Naive thymus-derived CD4-positive, alpha-beta T cell (primary cell): ENCODE measurements at regions of chr12 and their contacts with region 1.

Region 1: DNA sequence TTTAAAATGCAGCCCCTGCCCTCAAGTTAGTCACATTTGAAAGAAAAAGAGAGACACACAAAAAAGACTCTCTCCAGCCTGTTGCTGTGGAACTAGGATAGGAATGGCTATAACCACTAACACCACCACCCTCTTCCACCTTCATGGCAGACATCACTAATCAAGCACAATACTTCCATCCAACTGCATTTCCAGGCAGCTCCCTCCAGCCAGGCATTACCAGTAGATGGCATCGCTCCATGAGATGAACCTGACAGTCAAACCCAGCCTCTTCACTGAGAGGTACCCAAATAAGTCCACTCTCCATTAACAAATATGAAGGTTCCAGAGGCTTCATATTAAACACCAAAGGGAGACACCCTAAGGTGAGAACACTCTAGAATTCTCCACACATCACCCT is 24.4 kb downstream of the SLC8B1 start:
- DNase-seq: no peak
- ATAC-seq: no peak
- H3K4me3 ChIP-seq: no peak overlapping the region
- H3K4me3 Mint-ChIP-seq: no peak overlapping the region
- H3K27ac ChIP-seq: no peak overlapping the region
- H3K27ac Mint-ChIP-seq: peak overlapping the region in 3 of 9 donors; percentile 36 to 59 (median 43)
- H3K4me1 ChIP-seq: no peaks in the 10 kb centered on the region
- H3K4me1 Mint-ChIP-seq: peaks cover 0 to 4% (median 0%) of the 10 kb centered on the region in 7 donors
- H3K27me3 ChIP-seq: no peaks in the 10 kb centered on the region
- H3K27me3 Mint-ChIP-seq: no peaks in the 10 kb centered on the region

Region 2: GRCh38 chr12:113299619-113300237 is 10.8 kb before region 1 on chr12:
- CTCF ChIA-PET with region 1: no interaction called
- POLR2A ChIA-PET with region 1: no interaction called
- intact Hi-C with region 1: no loop called
- DNase-seq: no peak
- ATAC-seq: no peak
- H3K4me3 ChIP-seq: no peak overlapping the region
- H3K4me3 Mint-ChIP-seq: no peak overlapping the region
- H3K27ac ChIP-seq: no peak overlapping the region
- H3K27ac Mint-ChIP-seq: peak overlapping the region in 4 of 9 donors; percentile 58 to 69 (median 64)
- H3K4me1 ChIP-seq: peaks cover 0 to 14% of the 10 kb centered on the region in 2 donors
- H3K4me1 Mint-ChIP-seq: peaks cover 11 to 24% (median 18%) of the 10 kb centered on the region in 7 donors
- H3K27me3 ChIP-seq: no peaks in the 10 kb centered on the region
- H3K27me3 Mint-ChIP-seq: no peaks in the 10 kb centered on the region

Region 3: GRCh38 chr12:113422030-113422885 is 111.8 kb after region 1 on chr12 and contains the start of gene SDSL:
- CTCF ChIA-PET with region 1: interaction called, 4 read pairs
- POLR2A ChIA-PET with region 1: no interaction called
- intact Hi-C with region 1: loop called in 1 of 2 experiments (anchors 1 kb)
- DNase-seq: peak in 2 of 9 donors; percentile 11 to 38
- ATAC-seq: peak; percentile 91
- H3K4me3 ChIP-seq: no peak within 1 kb of the TSS
- H3K4me3 Mint-ChIP-seq: peak within 1 kb of the TSS in 5 of 10 donors; percentile 44 to 96 (median 89)
- H3K27ac ChIP-seq: no peak within 1 kb of the TSS
- H3K27ac Mint-ChIP-seq: peak within 1 kb of the TSS in 2 of 9 donors; percentile 58 to 91
- H3K4me1 ChIP-seq: no peaks in the 10 kb centered on the region
- H3K4me1 Mint-ChIP-seq: peaks cover 0 to 18% (median 7%) of the 10 kb centered on the region in 7 donors
- H3K27me3 ChIP-seq: no peaks in the 10 kb centered on the region
- H3K27me3 Mint-ChIP-seq: peaks cover 0 to 11% (median 0%) of the 10 kb centered on the region in 5 donors
- total RNA-seq, gene SDSL: 0.46 to 2.5 (median 1.7) TPM in 4 of 5 experiments, not detected in the other

Region 4: DNA sequence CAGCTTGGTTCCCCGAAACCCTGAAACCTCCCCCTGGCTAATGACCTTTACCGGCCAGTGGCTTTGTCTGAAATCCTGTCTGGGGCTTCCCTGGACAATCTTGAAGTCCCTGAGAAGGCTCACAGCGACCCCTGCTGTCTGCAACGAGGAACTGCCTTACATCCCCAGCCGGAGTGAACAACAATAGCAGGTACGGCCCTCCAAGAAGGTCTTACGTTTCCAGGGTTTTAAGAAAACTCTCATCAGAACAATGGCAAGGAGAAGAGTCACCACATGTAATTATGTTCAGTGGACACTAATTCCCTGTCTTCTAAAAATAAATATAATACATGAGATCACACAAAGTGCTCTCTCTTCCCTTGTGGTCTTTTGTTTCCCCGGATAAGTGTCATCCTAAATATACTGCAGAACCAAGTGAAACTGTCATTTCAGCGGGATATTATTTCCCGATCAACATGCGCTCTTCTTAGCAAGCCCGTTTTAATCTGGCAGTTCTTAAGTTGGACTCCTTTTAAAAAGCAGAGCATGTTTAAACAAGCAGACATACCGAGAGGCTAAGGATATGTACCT is 602.4 kb after region 1 on chr12:
- CTCF ChIA-PET with region 1: no interaction called
- POLR2A ChIA-PET with region 1: no interaction called
- intact Hi-C with region 1: loop called in 1 of 2 experiments (anchors 5 kb)
- DNase-seq: peak in 6 of 9 donors; percentile 7 to 51 (median 24)
- ATAC-seq: peak; percentile 47
- H3K4me3 ChIP-seq: no peak overlapping the region
- H3K4me3 Mint-ChIP-seq: no peak overlapping the region
- H3K27ac ChIP-seq: no peak overlapping the region
- H3K27ac Mint-ChIP-seq: peak overlapping the region in 1 of 9 donors; percentile 30
- H3K4me1 ChIP-seq: no peaks in the 10 kb centered on the region
- H3K4me1 Mint-ChIP-seq: peaks cover 0 to 4% (median 0%) of the 10 kb centered on the region in 7 donors
- H3K27me3 ChIP-seq: no peaks in the 10 kb centered on the region
- H3K27me3 Mint-ChIP-seq: no peaks in the 10 kb centered on the region